ENCODE measurements at regions of chr7 and their contacts with region 1.

Region 1: DNA sequence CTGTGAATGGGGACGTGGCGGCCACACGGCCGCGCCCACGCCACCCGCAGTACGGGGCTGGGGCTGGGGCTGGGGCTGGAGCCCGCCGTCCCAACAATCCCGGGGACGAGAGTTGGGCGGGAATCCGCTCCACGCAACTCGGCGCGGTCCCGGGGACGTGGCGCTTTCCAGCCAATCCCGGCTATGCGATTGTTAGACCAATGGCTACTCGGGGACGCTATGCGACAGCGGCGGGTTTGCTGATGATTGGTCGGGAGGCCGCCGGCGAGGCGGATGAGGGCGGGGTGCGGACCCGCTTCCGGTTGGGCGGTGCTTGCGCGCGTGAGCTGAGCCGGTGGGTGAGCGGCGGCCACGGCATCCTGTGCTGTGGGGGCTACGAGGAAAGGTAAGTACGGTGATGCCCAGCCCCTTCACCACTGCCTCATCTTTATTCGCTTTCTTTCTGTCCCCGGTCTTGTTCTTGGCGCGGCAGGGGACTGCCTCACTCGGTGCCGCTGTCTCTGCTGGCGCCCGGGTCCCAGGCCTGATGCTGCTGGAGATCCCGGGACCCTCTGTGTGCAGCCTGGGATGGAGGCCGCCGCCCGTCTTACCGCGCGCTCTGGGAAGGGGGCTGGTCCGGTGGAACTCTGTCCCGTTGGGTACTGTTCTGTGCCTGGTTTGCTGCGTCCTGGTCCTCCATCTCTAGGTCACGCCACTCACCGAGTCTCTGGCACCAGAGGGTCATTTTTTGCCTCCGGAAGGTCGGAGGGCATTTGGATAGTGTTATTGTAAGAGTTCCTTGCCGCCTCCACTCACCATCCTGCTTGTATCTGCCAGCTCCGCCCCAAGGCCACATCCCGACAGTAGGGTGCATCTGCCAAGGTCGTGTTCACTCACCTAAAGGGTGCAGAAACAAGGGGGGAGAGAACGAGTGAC is at the start of gene CALU:
- DNase-seq: peak; percentile 97
- H3K4me3 ChIP-seq: peak within 1 kb of the TSS; percentile 85 to 99 (median 91)
- H3K27ac ChIP-seq: peak within 1 kb of the TSS; percentile 93 to 97 (median 96)
- H3K4me1 ChIP-seq: peaks cover 15 to 48% (median 23%) of the 10 kb centered on the region in 4 donors
- H3K27me3 ChIP-seq: no peaks in the 10 kb centered on the region
- CTCF ChIP-seq: no peak
- EP300 ChIP-seq: no peak
- POLR2A ChIP-seq: peak; percentile 87
- total RNA-seq, gene CALU: 23.6 to 1,780 (median 44.0) TPM

Region 2: DNA sequence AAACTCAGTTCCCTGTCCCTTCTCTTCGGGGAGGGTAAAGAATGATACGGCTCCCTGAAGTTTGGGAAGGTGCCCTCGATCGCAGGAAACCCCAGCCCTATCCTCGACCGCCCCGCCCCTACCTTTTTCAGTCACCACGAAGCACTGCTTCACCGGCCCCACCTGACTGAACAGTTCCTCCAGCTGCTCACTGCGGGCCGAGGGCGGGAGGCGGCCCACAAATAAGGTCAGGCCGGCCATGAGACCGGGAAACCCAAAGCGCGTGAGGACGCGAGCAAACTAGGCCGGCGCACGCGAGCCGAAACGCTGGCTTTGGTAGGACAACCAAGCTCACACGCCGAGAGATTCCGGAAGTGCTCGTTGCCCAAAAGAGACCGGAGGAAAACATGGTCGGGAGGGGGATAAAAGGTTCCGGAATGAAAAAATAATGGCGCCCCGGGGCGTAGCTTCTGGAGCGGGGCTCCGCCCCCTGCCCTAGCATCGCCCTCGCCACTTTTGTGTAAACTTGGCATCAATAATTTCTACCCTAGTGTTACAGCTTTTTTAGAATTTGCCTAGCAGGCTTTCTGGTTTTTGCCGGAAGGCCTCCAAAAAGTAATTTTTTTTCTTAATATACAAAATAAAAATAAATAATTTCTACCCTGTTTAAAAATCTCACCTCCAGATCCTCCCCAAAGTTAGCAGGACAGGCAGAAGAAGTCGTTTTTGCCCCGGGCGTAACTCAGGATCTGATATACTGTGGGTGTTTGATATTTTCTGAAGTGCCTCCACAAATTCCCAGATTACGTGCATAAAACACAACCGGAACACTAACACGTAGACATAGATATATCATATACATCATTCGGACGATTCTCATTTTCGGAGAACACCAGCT is 395.5 kb before region 1 on chr7 and contains the start of gene RBM28:
- in situ Hi-C with region 1: no loop called
- intact Hi-C with region 1: no loop called
- DNase-seq: peak; percentile 87
- H3K4me3 ChIP-seq: peak within 1 kb of the TSS; percentile 55 to 88 (median 67)
- H3K27ac ChIP-seq: peak within 1 kb of the TSS; percentile 81 to 88 (median 87)
- H3K4me1 ChIP-seq: peaks cover 13 to 21% (median 17%) of the 10 kb centered on the region in 4 donors
- H3K27me3 ChIP-seq: no peaks in the 10 kb centered on the region
- CTCF ChIP-seq: no peak
- EP300 ChIP-seq: no peak
- POLR2A ChIP-seq: peak; percentile 63
- total RNA-seq, gene RBM28: 9.0 to 341 (median 34.2) TPM

Region 3: GRCh38 chr7:128791121-128791961 is 52.0 kb after region 1 on chr7:
- in situ Hi-C with region 1: no loop called
- intact Hi-C with region 1: loop called (anchors 2 kb)
- DNase-seq: peak; percentile 83
- H3K4me3 ChIP-seq: peak overlapping the region; percentile 53 to 82 (median 68)
- H3K27ac ChIP-seq: peak overlapping the region; percentile 59 to 78 (median 72)
- H3K4me1 ChIP-seq: peaks cover 5 to 23% (median 16%) of the 10 kb centered on the region in 4 donors
- H3K27me3 ChIP-seq: peaks cover 24% of the 10 kb centered on the region
- CTCF ChIP-seq: no peak
- EP300 ChIP-seq: no peak
- POLR2A ChIP-seq: peak; percentile 14

Region 4: DNA sequence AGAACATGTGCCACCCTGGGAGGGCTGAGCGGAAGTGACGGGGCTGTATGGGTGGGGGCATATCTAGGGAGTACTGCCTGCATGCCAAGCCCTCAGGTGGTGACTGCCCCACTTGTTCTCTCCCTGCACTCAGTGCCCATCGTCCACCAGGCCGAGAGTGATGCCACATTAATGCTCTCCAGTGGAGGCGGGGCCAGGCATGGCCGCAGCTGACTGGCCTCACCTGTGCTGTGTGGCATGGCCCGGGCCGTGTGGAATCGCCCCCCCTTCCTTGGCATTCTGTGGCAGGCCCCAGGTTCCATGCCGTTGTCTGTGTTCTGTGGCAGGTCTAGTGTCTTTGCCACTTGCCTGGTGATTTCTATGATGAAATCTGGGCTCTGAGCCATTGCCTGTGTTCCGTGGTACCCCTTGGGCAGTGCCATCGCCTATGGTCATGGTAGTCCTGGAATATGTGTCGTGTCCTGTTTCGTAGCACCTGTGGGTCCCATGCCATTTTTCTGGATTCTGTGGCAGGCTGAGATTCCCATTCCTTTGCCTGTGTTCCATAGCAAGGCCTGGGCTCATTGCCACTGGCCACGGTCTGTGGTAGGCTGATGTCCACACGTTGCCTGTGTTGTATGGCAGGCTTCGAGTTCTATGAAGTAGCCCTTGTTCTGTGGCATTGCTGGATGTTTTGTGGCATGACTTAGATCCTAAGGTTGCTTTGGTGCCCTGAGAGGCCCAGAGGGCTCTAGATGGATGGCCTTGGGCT is 99.9 kb after region 1 on chr7:
- in situ Hi-C with region 1: no loop called
- intact Hi-C with region 1: loop called (anchors 1 kb)
- DNase-seq: no peak
- H3K4me3 ChIP-seq: no peak overlapping the region
- H3K27ac ChIP-seq: peak overlapping the region in 3 of 4 donors; percentile 39 to 78 (median 48)
- H3K4me1 ChIP-seq: peaks cover 0 to 11% (median 5%) of the 10 kb centered on the region in 4 donors
- H3K27me3 ChIP-seq: no peaks in the 10 kb centered on the region
- CTCF ChIP-seq: no peak
- EP300 ChIP-seq: no peak
- POLR2A ChIP-seq: no peak

Region 5: GRCh38 chr7:130476297-130477150 is 1737.2 kb after region 1 on chr7:
- in situ Hi-C with region 1: no loop called
- intact Hi-C with region 1: no loop called
- DNase-seq: no peak
- H3K4me3 ChIP-seq: no peak overlapping the region
- H3K27ac ChIP-seq: no peak overlapping the region
- H3K4me1 ChIP-seq: no peaks in the 10 kb centered on the region
- H3K27me3 ChIP-seq: no peaks in the 10 kb centered on the region
- CTCF ChIP-seq: no peak
- EP300 ChIP-seq: no peak
- POLR2A ChIP-seq: no peak

Measured in transverse colon (tissue), 4 donors.